Activated CD4-positive, alpha-beta memory T cell treated with anti-CD3 and anti-CD28 coated beads for 36 hours (primary cell): ENCODE measurements at regions of chr2 and their contacts with region 1.

Region 1: DNA sequence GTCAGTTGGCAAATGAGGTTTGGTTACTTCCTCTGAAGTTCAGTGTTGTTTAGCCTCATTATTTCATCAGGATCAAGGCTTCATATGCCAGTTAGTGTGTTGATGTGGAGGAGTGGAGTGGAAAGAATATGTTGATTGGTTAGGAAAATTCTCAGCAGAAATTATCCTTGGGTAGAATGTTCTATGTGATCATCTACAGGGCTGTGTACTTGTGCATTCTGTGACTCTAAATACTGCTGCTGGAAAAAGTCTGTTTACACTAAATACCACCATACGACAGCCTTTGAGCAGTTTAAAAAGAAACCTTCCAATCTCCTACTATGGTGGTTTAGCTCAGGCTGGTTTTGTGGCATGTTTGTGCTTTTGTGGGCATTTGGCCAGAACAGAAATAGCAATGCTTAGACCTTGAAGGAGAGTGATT is 25.8 kb downstream of the CAB39 start:
- DNase-seq: no peak
- H3K4me3 Mint-ChIP-seq: no peak overlapping the region
- H3K27ac Mint-ChIP-seq: peak overlapping the region; percentile 63
- H3K4me1 Mint-ChIP-seq: peaks cover 77% of the 10 kb centered on the region
- H3K27me3 Mint-ChIP-seq: no peaks in the 10 kb centered on the region

Region 2: DNA sequence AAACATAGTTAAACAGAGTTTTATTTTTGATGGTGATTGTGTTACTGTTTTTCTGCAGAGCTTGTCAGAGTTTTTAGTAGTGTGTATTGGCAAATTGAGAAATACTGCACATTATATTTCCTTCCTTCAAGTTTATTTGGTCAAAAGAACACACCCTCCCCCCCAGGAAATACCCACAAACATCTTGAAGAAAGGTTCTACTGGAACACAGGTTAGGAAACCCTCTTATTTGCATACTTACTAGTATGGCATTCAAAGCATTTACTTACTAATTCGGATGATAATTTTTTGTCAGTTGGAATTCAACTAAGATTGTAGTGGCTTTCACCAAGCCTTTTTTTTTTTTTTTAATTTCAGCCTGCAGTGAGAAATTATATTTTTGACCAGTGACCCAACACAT is 16.7 kb before region 1 on chr2:
- CTCF ChIA-PET with region 1: no interaction called
- POLR2A ChIA-PET with region 1: interaction called, 3 read pairs
- intact Hi-C with region 1: loop called (anchors 1 kb)
- DNase-seq: no peak
- H3K4me3 Mint-ChIP-seq: no peak overlapping the region
- H3K27ac Mint-ChIP-seq: peak overlapping the region; percentile 79
- H3K4me1 Mint-ChIP-seq: peaks cover 89% of the 10 kb centered on the region
- H3K27me3 Mint-ChIP-seq: no peaks in the 10 kb centered on the region

Region 3: GRCh38 chr2:230774348-230774951 is 36.0 kb after region 1 on chr2:
- CTCF ChIA-PET with region 1: no interaction called
- POLR2A ChIA-PET with region 1: no interaction called
- intact Hi-C with region 1: loop called (anchors 5 kb)
- DNase-seq: no peak
- H3K4me3 Mint-ChIP-seq: no peak overlapping the region
- H3K27ac Mint-ChIP-seq: peak overlapping the region; percentile 33
- H3K4me1 Mint-ChIP-seq: peaks cover 87% of the 10 kb centered on the region
- H3K27me3 Mint-ChIP-seq: no peaks in the 10 kb centered on the region